Mammary epithelial cell (primary cell): ENCODE measurements at regions of chr20 and their contacts with region 1.

Region 1: DNA sequence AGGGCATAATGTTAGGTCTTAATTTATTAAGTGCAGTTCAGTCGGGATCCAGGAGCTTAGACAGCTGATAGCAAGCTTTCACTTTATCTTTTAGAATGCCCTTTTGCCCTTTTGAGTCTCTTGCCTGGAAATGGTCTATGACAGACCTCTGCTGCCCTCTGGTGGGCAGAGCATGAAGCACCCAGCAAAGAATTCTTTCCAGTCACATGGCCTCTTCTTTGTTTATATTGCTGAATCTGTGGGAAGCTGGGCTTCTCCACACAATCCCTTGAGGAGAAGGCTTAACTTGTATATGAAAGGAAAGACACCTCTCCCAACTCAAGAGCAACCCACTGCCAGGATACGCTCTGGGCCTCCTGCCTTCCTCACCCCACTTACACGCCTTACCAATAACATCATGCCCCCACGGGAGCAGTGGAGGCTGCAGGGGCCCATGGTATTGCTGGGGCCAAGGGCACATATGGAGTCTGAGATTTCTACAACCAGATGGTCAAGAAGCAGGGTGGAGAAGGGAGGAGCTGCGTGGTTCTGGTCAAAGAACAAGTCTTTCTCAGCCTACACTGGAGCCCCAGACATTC is 20.4 kb downstream of the WFDC3 start:
- DNase-seq: peak; percentile 60
- H3K4me3 ChIP-seq: no peak overlapping the region
- H3K27ac ChIP-seq: no peak overlapping the region
- H3K4me1 ChIP-seq: no peaks in the 10 kb centered on the region
- H3K27me3 ChIP-seq: no peaks in the 10 kb centered on the region
- CTCF ChIP-seq: peak; percentile 89 to 92

Region 2: DNA sequence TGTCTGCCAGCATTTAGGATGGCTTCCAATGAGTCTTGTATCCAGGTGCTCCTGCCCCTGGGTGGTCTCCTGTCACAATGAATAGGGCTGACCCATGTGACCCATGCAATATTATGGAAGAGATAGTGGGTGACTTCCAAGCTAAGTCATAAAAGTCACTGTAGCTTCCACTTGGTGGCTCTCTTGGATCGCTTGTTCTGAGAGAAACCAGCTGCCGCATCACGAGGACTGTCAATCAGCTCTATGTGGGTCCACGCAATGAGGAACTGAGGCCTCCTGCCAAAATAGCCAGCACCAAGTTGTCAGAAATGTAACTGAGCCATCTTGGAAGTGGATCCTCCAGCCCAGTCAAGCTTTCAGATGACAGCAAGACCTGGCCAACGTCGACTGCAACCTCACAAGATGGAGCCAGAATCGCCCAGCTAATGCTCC is 448.3 kb before region 1 on chr20:
- CTCF ChIA-PET with region 1: no interaction called
- dilution Hi-C with region 1: no loop called
- in situ Hi-C with region 1: loop called (anchors 5 to 10 kb)
- intact Hi-C with region 1: loop called (anchors 2 kb)
- DNase-seq: peak; percentile 51
- H3K4me3 ChIP-seq: no peak overlapping the region
- H3K27ac ChIP-seq: peak overlapping the region; percentile 1
- H3K4me1 ChIP-seq: no peaks in the 10 kb centered on the region
- H3K27me3 ChIP-seq: no peaks in the 10 kb centered on the region
- CTCF ChIP-seq: no peak

Region 3: DNA sequence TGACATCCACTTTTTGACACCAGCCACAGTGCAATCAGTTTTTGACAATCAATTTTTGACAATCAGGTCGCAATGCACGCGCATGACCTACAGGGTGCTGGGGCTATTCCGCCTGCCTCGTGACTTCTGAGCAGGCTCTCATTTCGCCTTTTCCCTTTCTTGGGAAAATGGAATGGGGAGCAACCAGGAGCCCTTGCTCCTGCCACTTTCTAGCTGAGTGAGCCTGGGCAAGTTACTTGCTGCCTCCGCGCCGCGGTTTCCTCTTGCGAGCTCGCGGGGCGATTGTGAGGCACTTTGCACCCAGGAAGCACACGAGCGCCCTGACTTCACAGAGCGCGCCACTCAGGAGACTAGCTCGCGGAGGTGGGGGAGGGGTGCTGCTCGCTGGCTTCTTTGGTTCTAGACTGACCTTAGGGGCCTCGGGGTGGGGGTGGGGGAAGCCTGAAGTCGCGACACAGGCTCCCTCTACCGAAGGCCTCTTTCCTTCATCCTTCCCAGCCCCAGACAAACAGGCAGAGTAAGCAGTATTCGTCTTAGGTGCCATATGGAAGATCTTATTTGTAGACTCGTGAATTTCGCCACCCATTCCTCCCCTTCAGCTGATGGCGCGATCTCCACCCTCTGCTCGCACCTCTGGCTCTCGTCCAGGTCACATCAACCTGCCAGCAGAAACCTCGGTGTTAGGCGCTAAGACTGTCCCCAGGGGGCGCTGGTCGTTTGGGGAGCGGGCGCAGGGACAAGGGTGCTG is 397.7 kb before region 1 on chr20:
- CTCF ChIA-PET with region 1: interaction called, 4 read pairs
- dilution Hi-C with region 1: no loop called
- in situ Hi-C with region 1: no loop called
- intact Hi-C with region 1: loop called (anchors 1 kb)
- DNase-seq: peak; percentile 67
- H3K4me3 ChIP-seq: peak overlapping the region in 2 of 3 experiments; percentile 28 to 49
- H3K27ac ChIP-seq: no peak overlapping the region
- H3K4me1 ChIP-seq: peaks cover 3% of the 10 kb centered on the region
- H3K27me3 ChIP-seq: no peaks in the 10 kb centered on the region
- CTCF ChIP-seq: peak; percentile 95 to 96

Region 4: GRCh38 chr20:45456632-45457031 is 314.6 kb before region 1 on chr20:
- CTCF ChIA-PET with region 1: no interaction called
- dilution Hi-C with region 1: loop called (anchors 5 kb)
- in situ Hi-C with region 1: loop called in 1 of 2 experiments (anchors 5 kb)
- intact Hi-C with region 1: loop called (anchors 1 kb)
- DNase-seq: peak; percentile 40
- H3K4me3 ChIP-seq: no peak overlapping the region
- H3K27ac ChIP-seq: no peak overlapping the region
- H3K4me1 ChIP-seq: no peaks in the 10 kb centered on the region
- H3K27me3 ChIP-seq: no peaks in the 10 kb centered on the region
- CTCF ChIP-seq: peak; percentile 52 to 63

Region 5: DNA sequence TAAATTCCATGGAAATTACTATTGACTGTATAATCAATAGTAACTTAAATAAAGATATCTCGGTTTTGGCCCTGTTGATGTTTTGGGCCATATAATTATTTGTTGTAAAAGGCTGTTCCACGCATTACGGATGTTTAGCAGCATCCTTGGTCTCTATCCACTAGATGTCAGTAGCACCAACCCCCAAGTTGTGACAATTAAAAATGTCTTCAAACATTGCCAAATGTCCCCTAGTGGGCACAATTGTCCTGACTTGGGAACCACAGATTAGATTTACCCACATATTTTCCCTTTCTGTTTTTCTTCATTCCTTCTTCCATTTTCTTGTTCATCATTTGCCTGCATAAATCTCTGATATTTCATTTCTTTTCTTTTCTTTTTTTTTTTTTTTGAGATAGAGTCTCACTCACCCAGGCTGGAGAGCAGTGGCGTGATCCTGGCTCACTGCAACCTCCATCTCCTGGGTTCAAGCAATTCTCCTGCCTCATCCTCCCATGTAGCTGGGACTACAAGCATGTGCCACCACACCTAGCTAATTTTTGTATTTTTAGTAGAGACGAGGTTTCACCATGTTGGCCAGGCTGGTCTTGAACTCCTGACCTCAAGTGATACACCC is 178.6 kb before region 1 on chr20:
- CTCF ChIA-PET with region 1: no interaction called
- dilution Hi-C with region 1: no loop called
- in situ Hi-C with region 1: loop called in 1 of 2 experiments (anchors 10 kb)
- intact Hi-C with region 1: loop called (anchors 1 kb)
- DNase-seq: peak; percentile 56
- H3K4me3 ChIP-seq: no peak overlapping the region
- H3K27ac ChIP-seq: no peak overlapping the region
- H3K4me1 ChIP-seq: no peaks in the 10 kb centered on the region
- H3K27me3 ChIP-seq: peaks cover 4% of the 10 kb centered on the region
- CTCF ChIP-seq: peak; percentile 76 to 95

Region 6: DNA sequence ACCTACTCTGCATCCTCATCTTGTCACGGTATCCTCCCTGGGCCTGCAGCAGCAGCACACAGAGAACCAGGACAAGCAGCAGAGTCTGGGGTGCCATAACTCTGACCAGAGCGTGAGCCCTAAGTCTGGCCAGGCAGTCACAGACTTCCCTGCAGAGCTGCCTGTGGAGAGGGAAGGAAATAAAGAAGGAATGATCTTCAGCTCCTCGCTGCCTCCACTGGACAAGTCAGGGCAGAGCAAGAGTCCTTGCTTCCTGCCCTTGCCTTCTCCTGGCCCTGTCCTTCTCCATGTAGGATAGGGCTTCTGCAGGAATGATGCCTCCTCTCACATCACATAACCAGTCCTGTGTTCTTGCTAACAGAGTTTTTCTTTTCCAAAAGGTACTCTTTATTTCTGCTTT is 85.4 kb before region 1 on chr20:
- CTCF ChIA-PET with region 1: no interaction called
- dilution Hi-C with region 1: no loop called
- in situ Hi-C with region 1: no loop called
- intact Hi-C with region 1: no loop called
- DNase-seq: peak; percentile 21
- H3K4me3 ChIP-seq: no peak overlapping the region
- H3K27ac ChIP-seq: no peak overlapping the region
- H3K4me1 ChIP-seq: peaks cover 5% of the 10 kb centered on the region
- H3K27me3 ChIP-seq: no peaks in the 10 kb centered on the region
- CTCF ChIP-seq: peak; percentile 31 to 42